H1 (cell line): ENCODE measurements at regions of chr12 and their contacts with region 1.

Region 1: DNA sequence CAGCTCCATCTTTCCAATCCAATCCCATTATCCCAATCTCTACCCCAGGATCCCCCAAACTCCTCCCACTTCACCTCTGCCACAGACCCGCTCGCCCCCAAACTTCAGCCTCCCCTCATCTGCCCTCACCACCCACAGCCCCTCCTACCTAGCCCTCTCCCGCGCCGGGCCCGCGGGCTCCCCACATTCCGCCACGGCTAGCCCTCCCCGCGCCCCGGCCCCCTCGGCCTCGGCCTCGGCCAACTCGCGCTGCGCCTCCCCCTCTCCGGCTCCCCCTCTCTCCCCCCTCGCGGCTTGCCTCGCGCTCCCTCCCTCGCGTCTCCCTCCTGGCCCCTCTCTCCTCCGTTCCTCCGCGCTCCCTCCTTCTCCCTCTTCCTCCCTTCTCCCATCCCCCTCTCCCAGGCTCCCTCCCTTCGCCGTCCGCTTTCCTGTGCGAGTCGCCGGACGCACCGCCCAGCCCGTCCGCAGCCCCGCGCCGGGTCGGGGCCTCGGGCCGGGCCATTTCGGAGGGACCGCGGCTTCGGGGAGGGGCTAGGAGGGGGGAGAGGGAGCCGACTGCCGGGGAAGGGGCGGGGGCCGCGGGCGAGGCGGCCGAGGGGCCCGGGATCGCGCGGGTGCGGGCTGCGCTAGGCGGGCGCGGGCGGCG is at the start of gene ATN1:
- DNase-seq: peak in 1 of 2 experiments; percentile 83
- H3K4me3 ChIP-seq: peak within 1 kb of the TSS; percentile 90 to 99 (median 92)
- H3K27ac ChIP-seq: peak within 1 kb of the TSS; percentile 17; the same call in 1 of the 2 replicates
- H3K4me1 ChIP-seq: peaks cover 13 to 31% (median 17%) of the 10 kb centered on the region in 4 experiments
- H3K27me3 ChIP-seq: no peaks in the 10 kb centered on the region
- CTCF ChIP-seq: no peak
- EP300 ChIP-seq: peak in 1 of 2 experiments; percentile 62; a peak in 1 of 3 replicates
- POLR2A ChIP-seq: no peak
- RAD21 ChIP-seq: peak in 1 of 2 experiments; percentile 8; a peak in 1 of 4 replicates
- total RNA-seq, gene ATN1: 69.6 and 73.4 TPM in 2 replicates

Region 2: DNA sequence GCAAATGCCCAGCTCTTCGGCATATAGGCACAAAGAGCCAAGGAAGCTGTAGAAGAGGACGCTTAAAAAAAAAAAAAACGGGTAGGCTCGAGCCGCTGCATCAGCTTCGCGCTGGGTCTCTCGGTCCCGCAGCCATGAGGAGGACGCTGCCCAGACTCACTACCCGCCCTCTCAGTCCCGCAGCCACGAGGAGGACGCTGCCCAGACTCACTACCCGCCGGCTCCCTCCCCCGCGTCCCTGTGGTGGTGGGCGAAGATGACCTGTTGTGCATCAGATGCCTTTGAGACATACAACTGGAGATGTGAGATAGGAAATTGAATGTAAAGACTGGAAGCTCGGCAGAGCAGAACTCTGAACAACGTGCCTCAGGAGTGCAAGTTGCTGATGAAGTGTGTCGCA is 43.0 kb before region 1 on chr12:
- CTCF ChIA-PET with region 1: interaction called, 5 read pairs
- POLR2A ChIA-PET with region 1: interaction called, 11 read pairs
- DNase-seq: no peak
- H3K4me3 ChIP-seq: no peak overlapping the region
- H3K27ac ChIP-seq: no peak overlapping the region
- H3K4me1 ChIP-seq: peaks cover 2 to 10% (median 5%) of the 10 kb centered on the region in 4 experiments; a peak in 5 of 7 replicates
- H3K27me3 ChIP-seq: no peaks in the 10 kb centered on the region
- CTCF ChIP-seq: no peak
- EP300 ChIP-seq: no peak
- POLR2A ChIP-seq: no peak
- RAD21 ChIP-seq: no peak

Region 3: DNA sequence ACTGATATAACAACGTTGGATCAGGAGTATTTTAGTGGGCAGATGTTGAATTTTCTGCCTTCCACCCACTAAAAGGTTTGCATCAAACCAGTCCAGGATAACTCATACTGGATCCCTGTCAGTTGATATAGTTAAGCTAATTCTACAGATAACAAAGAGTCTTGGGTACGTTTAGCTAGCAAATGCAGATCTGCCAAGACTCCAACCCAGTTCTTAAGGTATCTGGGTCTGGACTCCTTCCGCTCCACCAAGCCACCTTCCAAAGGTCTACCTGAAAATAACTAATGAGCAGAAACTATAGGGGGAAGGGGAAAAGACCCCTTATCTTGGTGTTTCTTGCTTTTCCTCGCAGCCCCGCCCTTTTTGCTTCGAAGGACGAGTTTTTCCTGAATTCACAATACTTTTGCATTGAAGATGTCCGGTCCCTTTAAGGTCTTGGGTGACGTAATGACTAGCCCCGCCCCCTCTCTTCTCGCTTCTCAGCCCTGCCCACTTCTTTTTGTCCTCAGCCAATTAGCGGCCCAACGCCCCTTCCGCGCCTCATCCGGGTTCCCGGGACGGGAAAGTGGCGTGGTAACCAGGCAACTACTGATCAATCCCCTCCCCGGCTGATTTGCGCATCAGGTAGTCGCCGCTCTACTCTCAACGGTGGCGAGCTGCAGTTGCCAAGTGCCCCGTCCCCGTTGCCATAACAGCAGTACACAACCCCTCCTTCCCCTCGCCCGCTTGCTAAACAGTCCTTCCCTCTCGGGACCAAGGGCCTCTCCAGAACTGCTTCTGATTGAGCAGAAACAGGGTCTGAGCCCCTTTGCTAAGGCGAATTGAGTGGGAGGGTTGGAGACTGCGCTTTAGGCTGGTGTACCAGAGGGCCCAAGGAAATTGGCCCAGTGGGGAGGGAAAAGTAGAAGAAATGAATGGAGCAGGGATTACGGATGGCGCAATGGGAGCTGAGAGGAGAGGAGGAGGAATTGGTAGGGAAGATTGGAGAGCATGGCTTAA is 22.9 kb before region 1 on chr12 and contains the start of gene LRRC23:
- CTCF ChIA-PET with region 1: interaction called, 74 read pairs
- POLR2A ChIA-PET with region 1: interaction called, 1,027 read pairs
- DNase-seq: peak; percentile 96 to 98
- H3K4me3 ChIP-seq: peak within 1 kb of the TSS; percentile 46 to 64 (median 52)
- H3K27ac ChIP-seq: peak within 1 kb of the TSS; percentile 76
- H3K4me1 ChIP-seq: peaks cover 3 to 12% (median 11%) of the 10 kb centered on the region in 4 experiments; a peak in 5 of 7 replicates
- H3K27me3 ChIP-seq: peaks cover 0 to 4% (median 0%) of the 10 kb centered on the region in 4 experiments; a peak in 4 of 7 replicates
- CTCF ChIP-seq: no peak
- EP300 ChIP-seq: peak in 1 of 2 experiments; percentile 72; a peak in 1 of 3 replicates
- POLR2A ChIP-seq: peak in 1 of 2 experiments; percentile 76; a peak in 1 of 3 replicates
- RAD21 ChIP-seq: no peak
- total RNA-seq, gene LRRC23: 2.5 and 2.9 TPM in 2 replicates

Region 4: GRCh38 chr12:6937481-6938297 is 10.2 kb after region 1 on chr12:
- CTCF ChIA-PET with region 1: interaction called, 253 read pairs
- POLR2A ChIA-PET with region 1: interaction called, 1,027 read pairs
- DNase-seq: peak in 1 of 2 experiments; percentile 93
- H3K4me3 ChIP-seq: peak overlapping the region; percentile 42 to 69 (median 58)
- H3K27ac ChIP-seq: peak overlapping the region; percentile 90
- H3K4me1 ChIP-seq: peaks cover 0 to 13% (median 5%) of the 10 kb centered on the region in 4 experiments; a peak in 5 of 7 replicates
- H3K27me3 ChIP-seq: no peaks in the 10 kb centered on the region
- CTCF ChIP-seq: peak in 2 of 3 experiments; percentile 90 to 99; a peak in 3 of 4 replicates
- EP300 ChIP-seq: peak; percentile 56 to 63; a peak in 1 of 3 replicates
- POLR2A ChIP-seq: peak in 1 of 2 experiments; percentile 93; a peak in 2 of 3 replicates
- RAD21 ChIP-seq: peak; percentile 51 to 53; a peak in 3 of 4 replicates